Activated CD4-positive, alpha-beta T cell treated with anti-CD3 and anti-CD28 coated beads, Interleukin-2, amount 10 ng/mL, durations not matched to agents 24 days and 14 days (primary cell): ENCODE measurements at regions of chrX and their contacts with region 1.

Region 1: GRCh38 chrX:1391707-1392375 is at the start of gene SLC25A6:
- DNase-seq: peak; percentile 100
- H3K4me3 Mint-ChIP-seq: peak within 1 kb of the TSS; percentile 97
- H3K27ac Mint-ChIP-seq: peak within 1 kb of the TSS; percentile 98
- H3K4me1 Mint-ChIP-seq: peaks cover 36% of the 10 kb centered on the region
- H3K27me3 Mint-ChIP-seq: no peaks in the 10 kb centered on the region
- total RNA-seq, gene SLC25A6: 302 and 306 TPM in 2 replicates

Region 2: GRCh38 chrX:1323315-1323714 is 68.5 kb before region 1 on chrX:
- intact Hi-C with region 1: loop called (anchors 2 kb)
- DNase-seq: peak; percentile 86
- H3K4me3 Mint-ChIP-seq: peak overlapping the region; percentile 10
- H3K27ac Mint-ChIP-seq: peak overlapping the region; percentile 66
- H3K4me1 Mint-ChIP-seq: peaks cover 16% of the 10 kb centered on the region
- H3K27me3 Mint-ChIP-seq: peaks cover 2% of the 10 kb centered on the region